HEK293 (cell line): ENCODE measurements at regions of chr2 and their contacts with region 1.

Region 1: DNA sequence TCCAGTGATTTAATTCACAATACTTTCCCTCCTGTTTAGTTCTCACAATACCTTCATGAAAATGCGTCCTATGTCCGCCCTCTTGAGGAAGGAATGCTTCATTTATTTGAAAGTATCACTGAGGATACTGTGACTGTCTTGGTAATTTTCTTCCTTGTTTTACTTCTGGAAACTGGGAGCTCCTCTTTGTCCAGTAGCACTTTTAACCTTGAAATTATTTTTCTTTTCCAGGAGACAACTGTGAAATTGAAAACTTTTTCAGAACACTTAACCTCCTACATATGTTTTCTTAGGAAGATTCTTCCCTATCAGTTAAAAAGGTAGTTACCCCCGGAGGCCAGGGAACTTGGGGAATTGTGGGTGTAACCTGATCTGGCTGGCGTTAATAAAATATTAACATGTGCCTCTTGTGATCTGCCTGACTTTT is 58.9 kb upstream of the STON1 start:
- H3K4me3 ChIP-seq: no peak overlapping the region
- H3K27ac ChIP-seq: no peak overlapping the region
- H3K4me1 ChIP-seq: no peaks in the 10 kb centered on the region
- CTCF ChIP-seq: peak; percentile 49; the same call in 1 of the 2 replicates

Region 2: DNA sequence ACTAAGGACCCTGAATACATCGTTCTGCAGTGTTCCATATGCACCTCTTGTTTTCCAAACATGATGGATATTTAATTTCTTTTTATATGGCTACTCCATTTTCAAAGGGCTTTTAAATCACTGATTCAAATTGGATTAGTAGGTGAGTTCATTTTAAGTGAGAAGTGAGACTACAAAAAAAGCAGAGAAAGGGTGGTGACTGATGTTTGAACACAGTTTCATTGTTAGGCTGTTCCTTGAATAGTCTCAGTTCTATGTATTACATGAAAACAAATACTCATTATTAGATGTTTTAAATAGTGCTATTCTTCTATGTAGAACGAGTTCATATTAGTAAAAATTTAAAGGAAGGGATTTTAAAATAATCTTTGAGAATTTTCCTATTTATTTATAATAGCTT is 13.8 kb before region 1 on chr2:
- CTCF ChIA-PET with region 1: interaction called, 18 read pairs
- POLR2A ChIA-PET with region 1: no interaction called
- H3K4me3 ChIP-seq: no peak overlapping the region
- H3K27ac ChIP-seq: no peak overlapping the region
- H3K4me1 ChIP-seq: no peaks in the 10 kb centered on the region
- CTCF ChIP-seq: no peak

Region 3: GRCh38 chr2:48589170-48589767 is 118.2 kb after region 1 on chr2:
- CTCF ChIA-PET with region 1: interaction called, 15 read pairs
- POLR2A ChIA-PET with region 1: no interaction called
- H3K4me3 ChIP-seq: no peak overlapping the region
- H3K27ac ChIP-seq: no peak overlapping the region
- H3K4me1 ChIP-seq: no peaks in the 10 kb centered on the region
- CTCF ChIP-seq: no peak; the same call in 1 of the 2 replicates